Adrenal gland (tissue), 19 donors: ENCODE measurements at regions of chr1 and their contacts with region 1.

Region 1: DNA sequence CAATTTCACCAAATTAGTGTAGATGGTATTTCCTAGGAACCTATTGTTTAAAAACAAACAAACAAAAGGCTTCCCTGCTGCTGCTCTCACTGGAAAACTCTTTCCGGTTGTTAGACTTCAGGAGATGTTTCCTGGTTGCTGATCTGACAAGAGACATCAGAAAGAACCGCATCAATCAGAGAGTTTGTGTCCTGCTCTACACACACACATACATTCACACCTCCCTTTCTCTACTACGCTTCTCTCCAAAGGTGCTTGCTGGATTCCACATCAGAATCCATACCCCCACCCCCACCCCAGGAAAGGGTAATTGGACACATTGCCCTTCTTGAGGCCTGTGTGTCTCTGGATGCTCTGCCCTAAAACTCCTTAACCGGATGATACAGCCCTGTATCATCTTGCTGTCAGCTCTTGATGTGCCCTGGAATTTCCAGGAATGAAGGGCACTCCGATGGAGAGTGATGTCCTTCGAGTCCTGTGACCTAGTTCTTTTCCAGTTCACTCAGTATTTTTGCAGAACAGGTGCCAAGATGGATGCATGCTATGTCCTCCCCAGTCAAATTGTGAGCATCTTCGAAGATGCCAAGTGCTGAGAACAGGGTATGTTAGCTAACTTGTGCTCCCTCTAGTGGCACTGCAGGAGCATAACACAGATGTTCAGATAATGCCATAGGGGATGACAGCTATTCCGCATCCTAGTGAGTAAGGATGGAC is 113.7 kb upstream of the SLC35F3 start:
- DNase-seq: peak; percentile 23 to 62 (median 35)
- H3K4me3 ChIP-seq: no peak overlapping the region
- H3K27ac ChIP-seq: no peak overlapping the region
- H3K4me1 ChIP-seq: no peaks in the 10 kb centered on the region
- H3K27me3 ChIP-seq: no peaks in the 10 kb centered on the region
- CTCF ChIP-seq: peak; percentile 87 to 92 (median 90)
- POLR2A ChIP-seq: no peak

Region 2: DNA sequence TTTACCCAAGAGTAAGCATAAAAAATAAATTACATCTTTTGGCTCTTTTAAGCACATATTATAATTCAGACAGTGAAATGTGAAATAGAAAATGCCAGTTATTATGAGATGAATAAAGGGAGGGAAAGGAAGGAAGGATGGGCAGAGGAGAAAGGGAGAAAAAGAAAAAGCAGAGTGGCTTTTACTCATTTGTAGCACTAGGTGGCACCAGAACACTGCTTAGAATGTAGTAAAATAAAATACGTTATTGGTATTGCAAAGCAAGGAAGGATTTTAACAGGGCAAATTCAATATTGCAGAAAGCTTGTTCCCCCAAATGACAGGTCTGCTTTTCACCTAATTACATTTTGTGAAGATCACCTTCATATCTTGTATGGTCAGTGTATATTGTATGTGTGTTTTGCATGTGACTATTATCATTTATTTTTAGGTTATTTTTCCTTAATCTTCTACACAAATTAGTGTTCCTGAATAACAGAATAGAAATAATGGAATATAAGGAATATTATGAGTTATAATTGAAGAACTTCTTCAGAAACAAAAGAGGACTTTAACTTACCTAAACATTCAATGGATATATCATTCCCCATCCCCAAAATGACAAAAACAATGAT is 486.2 kb before region 1 on chr1:
- intact Hi-C with region 1: loop called in 1 of 2 experiments (anchors 10 kb)
- DNase-seq: no peak
- H3K4me3 ChIP-seq: no peak overlapping the region
- H3K27ac ChIP-seq: no peak overlapping the region
- H3K4me1 ChIP-seq: no peaks in the 10 kb centered on the region
- H3K27me3 ChIP-seq: no peaks in the 10 kb centered on the region
- CTCF ChIP-seq: peak; percentile 67 to 88 (median 82)
- POLR2A ChIP-seq: no peak

Region 3: DNA sequence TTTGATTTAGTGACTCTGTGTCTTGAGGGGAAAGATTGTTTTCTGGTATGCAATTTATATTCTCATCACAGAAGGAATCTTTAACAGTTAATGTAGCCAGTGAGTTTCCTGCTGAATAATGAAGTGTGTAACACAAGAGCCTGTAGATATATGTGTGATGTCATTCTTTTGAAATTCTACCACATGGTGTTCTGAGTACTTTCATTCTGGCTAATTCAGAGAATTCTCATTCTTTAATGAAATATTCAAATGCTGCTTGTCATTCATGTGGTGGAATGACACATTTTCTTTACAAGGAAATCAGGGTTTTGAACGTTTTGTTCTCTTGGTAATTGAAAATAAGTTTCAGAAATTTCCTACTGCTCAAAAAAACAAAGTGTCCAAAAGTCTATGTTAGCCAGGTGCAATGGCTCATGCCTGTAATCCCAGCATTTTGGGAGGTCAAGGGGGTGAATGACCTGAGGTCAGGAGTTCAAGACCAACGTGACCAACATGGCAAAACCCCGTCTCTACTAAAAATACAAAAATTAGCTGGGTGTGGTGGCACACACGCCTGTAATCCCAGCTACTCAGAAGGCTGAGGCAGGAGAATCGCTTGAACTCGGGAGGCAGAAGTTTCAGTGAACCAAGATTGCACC is 383.7 kb before region 1 on chr1:
- intact Hi-C with region 1: no loop called
- DNase-seq: no peak
- H3K4me3 ChIP-seq: no peak overlapping the region
- H3K27ac ChIP-seq: no peak overlapping the region
- H3K4me1 ChIP-seq: no peaks in the 10 kb centered on the region
- H3K27me3 ChIP-seq: no peaks in the 10 kb centered on the region
- CTCF ChIP-seq: no peak
- POLR2A ChIP-seq: no peak

Region 4: DNA sequence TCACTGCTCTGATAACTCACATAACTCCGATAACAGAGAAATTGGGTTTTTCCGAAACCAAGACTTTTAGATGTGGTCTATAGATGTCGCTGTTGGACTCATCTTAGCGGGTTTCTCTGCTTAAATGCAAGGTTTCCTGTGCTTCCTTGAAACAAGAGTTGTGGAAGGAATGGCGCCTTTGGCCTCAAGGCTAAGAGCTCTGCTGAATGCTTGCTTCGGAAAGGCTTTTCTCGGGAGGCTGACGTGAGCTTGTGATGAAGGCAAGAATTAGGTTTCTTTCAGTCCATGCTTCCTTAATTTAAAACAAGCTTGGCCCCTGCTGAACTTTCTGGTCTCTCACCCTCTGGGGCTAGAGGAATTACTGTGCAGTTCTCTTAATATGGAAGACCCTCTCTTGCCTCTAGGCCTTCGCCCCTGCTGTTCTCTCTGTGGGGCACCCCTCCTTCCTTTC is 349.8 kb before region 1 on chr1:
- intact Hi-C with region 1: loop called in 1 of 2 experiments (anchors 5 kb)
- DNase-seq: peak in 6 of 7 donors; percentile 27 to 50 (median 33)
- H3K4me3 ChIP-seq: no peak overlapping the region
- H3K27ac ChIP-seq: no peak overlapping the region
- H3K4me1 ChIP-seq: peaks cover 0 to 4% of the 10 kb centered on the region in 2 donors
- H3K27me3 ChIP-seq: no peaks in the 10 kb centered on the region
- CTCF ChIP-seq: peak; percentile 49 to 74 (median 66)
- POLR2A ChIP-seq: no peak

Region 5: DNA sequence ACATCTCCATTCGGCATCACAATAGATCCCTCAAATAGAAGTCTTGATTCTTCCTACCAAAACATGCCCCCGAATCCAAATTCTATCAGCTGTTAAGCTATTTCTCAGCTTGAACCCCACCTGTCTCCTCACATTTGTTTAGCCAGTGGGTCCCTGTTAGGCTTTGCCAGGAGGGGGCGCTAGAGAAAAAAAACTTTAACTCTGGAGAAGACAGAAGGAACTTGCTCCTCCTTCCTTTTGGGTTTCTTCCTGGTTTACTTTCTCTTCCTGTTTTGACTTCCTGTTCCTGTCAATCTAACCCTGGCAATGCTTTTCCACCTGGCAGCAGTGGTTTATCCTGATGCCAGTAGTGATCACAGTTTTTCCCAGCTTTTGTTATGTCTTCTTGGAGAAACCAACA is 272.5 kb before region 1 on chr1:
- intact Hi-C with region 1: loop called in 1 of 2 experiments (anchors 10 kb)
- DNase-seq: peak; percentile 26 to 64 (median 53)
- H3K4me3 ChIP-seq: no peak overlapping the region
- H3K27ac ChIP-seq: no peak overlapping the region
- H3K4me1 ChIP-seq: no peaks in the 10 kb centered on the region
- H3K27me3 ChIP-seq: no peaks in the 10 kb centered on the region
- CTCF ChIP-seq: peak; percentile 43 to 65 (median 54)
- POLR2A ChIP-seq: no peak

Region 6: DNA sequence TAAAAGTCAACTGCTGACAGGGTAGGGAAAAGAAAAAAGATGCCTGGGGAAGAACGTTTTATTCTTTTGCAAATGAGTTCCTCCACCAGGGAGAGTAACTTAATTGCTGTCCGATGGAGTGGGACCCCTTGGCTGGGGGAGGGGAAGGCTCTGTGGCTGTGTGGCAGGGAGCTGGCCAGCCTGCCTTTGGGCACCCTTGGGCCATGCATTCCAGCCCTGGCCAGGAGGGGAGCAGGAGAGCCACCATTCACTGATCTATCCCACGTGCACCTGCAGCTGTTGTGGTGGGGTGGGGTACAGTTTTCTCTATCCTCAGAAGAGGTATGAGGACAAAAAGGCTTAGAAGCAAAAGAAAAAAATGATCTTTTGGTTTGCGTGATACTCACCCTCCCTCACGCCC is 60.0 kb before region 1 on chr1:
- intact Hi-C with region 1: no loop called
- DNase-seq: no peak
- H3K4me3 ChIP-seq: no peak overlapping the region
- H3K27ac ChIP-seq: no peak overlapping the region
- H3K4me1 ChIP-seq: no peaks in the 10 kb centered on the region
- H3K27me3 ChIP-seq: no peaks in the 10 kb centered on the region
- CTCF ChIP-seq: no peak
- POLR2A ChIP-seq: no peak